Activated naive CD4-positive, alpha-beta T cell treated with anti-CD3 and anti-CD28 coated beads, Interleukin-2, amount 10 ng/mL, durations not matched to agents 7 days and 5 days (primary cell): ENCODE measurements at regions of chr14 and their contacts with region 1.

Region 1: DNA sequence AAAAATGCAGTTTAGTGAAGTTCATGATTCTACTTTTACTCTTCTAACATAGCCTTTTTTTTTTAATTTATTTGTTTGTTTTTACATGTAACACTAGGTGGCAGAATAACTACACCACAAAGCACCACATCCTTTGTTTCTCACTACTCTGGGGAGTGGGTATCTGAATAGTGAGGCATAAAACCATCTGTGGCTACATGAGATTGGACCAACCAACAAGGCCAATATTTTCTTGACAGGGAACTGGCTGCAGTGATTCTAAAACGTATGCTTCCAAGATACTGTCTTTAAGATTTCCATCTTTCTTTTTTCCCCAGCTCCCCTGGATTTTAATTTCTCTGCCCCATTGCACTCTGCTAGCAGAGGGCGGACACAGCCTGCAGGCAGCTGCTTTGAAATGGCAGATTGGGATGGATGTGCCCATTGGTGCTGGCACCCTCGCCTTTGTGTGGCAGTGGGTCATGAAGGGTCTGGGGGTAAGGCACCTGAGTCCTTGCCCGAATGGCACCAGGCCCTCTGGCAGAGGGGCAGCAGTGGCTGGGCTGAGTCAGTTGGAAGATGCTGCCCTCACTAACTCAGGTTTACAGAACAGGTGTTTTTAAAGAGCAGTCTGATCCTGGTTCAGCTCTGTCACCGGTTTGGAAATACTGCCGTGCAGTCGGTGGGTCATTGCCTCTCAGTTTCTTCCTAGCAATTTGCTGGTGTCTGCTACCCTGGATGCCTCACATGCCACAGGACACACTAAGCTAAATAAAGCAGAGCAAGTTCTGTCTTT is 429.1 kb downstream of the RAD51B start:
- DNase-seq: peak; percentile 24
- H3K4me3 Mint-ChIP-seq: no peak overlapping the region
- H3K27ac Mint-ChIP-seq: no peak overlapping the region
- H3K4me1 Mint-ChIP-seq: peaks cover 24% of the 10 kb centered on the region
- H3K27me3 Mint-ChIP-seq: no peaks in the 10 kb centered on the region

Region 2: DNA sequence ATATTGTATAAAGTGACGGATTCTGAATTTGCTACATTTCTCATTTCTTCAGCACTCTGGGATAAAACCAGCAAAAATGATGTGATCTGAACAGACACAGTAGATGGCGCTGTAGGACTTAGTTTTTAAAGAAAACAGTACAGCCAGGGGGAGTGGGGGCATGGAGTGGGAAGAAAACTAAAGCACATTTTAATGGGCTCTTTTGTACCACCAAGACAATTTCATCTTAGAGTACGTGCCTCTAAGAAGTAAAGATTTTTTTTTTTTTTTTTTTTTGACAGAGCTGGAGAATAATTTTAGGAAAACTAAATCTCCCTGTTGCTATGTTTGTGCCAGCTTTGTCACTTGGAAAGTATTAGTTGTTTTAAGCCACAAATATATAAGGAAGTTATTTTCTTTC is 304.7 kb before region 1 on chr14:
- CTCF ChIA-PET with region 1: interaction called, 11 read pairs
- DNase-seq: peak; percentile 60
- H3K4me3 Mint-ChIP-seq: no peak overlapping the region
- H3K27ac Mint-ChIP-seq: no peak overlapping the region
- H3K4me1 Mint-ChIP-seq: no peaks in the 10 kb centered on the region
- H3K27me3 Mint-ChIP-seq: no peaks in the 10 kb centered on the region

Region 3: DNA sequence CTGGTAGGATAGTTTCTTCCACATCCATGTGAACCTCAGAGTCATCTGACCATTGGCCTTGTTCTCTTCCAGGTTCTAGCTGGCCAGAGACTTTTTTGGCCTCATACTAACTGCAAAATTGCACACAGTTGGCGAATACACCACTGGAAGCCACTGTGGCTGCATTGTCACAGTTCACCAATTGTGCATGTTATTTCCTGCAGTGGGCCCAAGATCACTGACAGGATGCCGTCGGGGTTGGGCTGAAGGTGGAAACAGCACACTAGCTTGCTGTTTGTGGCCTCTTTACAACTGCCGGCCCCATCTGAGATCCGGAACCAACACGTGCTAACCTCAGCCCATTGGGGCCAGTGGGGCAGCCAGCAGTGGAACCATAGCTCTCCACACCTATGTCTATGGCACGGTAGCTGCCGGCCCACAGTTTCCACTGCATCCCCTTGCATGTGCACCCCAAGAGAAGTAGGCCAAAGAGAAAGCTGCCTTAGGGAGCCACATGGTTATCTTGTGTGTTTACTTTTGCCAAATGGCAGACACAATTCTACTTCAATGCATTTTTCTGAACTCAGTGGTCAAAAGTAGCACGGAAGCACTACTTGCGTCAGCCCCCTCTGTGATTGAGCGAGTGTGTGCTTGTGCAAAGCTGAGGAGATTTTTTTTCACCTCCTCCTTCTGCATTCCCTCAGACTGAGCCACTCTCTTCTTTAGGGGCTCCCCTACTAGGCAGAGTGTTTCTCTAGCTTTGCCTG is 34.9 kb after region 1 on chr14:
- CTCF ChIA-PET with region 1: interaction called, 13 read pairs
- DNase-seq: peak; percentile 78
- H3K4me3 Mint-ChIP-seq: peak overlapping the region; percentile 18
- H3K27ac Mint-ChIP-seq: peak overlapping the region; percentile 96
- H3K4me1 Mint-ChIP-seq: peaks cover 54% of the 10 kb centered on the region
- H3K27me3 Mint-ChIP-seq: no peaks in the 10 kb centered on the region

Region 4: DNA sequence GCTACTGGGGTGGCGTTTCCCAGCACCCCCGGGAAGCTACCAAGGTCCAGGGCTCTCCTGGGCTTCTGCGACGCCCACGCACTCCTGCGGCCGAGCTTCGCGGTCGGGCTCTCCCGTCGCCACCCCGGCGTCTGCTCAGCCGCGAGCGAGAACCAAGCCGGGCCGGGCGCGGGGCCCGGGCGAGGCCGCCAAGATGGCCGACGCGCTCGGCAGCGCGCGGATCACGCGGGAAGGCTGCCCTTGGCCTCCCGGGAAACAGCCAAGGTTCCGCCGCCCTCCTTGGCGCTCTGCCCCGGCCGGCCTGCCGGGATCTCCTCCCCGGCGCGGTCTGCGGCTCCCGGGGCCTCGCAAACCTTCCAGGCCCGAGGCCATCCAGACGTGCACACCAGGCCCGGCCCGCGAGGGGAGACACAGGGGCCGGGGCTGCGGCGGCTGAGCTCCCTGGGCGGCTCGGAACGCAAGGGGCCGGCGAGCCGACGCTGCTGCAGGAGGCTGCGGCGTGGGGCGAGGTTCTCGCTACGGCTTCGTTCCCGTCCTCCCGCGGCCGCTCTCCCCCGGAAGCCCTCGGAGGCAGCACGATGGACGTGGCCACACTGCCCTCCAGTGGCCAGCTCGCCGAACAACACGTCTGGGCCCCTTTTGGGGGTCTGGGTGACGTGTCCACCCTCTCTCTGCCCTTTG is 567.7 kb after region 1 on chr14:
- CTCF ChIA-PET with region 1: interaction called, 149 read pairs
- DNase-seq: peak; percentile 92
- H3K4me3 Mint-ChIP-seq: peak overlapping the region; percentile 77
- H3K27ac Mint-ChIP-seq: peak overlapping the region; percentile 99
- H3K4me1 Mint-ChIP-seq: peaks cover 72% of the 10 kb centered on the region
- H3K27me3 Mint-ChIP-seq: no peaks in the 10 kb centered on the region